CD8-positive, alpha-beta T cell (primary cell): ENCODE measurements at regions of chr4 and their contacts with region 1.

Region 1: DNA sequence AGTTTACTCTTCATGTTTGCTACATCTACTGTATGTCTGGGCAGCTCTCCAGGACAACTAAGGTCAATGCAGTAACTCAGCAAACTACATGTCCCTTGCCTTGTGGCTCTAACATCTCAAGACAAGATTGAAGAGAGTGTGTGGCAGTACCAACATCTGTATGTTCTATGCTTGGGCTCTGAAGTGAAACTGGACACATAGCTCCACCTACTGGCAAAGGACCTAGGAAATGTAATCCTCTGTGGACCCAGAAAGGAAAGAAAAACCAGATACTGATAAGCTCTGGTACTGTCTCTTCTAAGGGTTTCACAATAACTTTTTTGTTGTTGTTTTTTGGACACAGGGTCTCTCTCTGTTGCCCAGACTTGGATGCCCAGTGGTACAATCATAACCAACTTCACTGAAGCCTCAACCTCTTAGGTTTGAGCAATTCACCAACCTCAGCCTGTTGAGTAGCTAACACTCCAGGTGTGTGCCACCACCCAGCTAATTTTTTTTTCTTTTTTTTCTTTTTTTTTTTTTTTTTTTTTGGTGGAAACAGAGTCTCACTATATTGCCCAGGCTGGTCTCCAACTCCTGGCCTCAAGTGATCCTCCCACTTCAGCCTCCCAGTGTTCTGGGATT is 64.1 kb downstream of the QDPR start:
- DNase-seq: peak; percentile 5 to 73 (median 44)
- ATAC-seq: peak; percentile 66
- H3K4me3 ChIP-seq: no peak overlapping the region
- H3K4me3 Mint-ChIP-seq: no peak overlapping the region
- H3K27ac ChIP-seq: no peak overlapping the region
- H3K27ac Mint-ChIP-seq: no peak overlapping the region
- H3K4me1 ChIP-seq: no peaks in the 10 kb centered on the region
- H3K4me1 Mint-ChIP-seq: no peaks in the 10 kb centered on the region
- H3K27me3 ChIP-seq: no peaks in the 10 kb centered on the region
- H3K27me3 Mint-ChIP-seq: no peaks in the 10 kb centered on the region
- CTCF ChIP-seq: peak; percentile 71

Region 2: GRCh38 chr4:16289897-16290554 is 1157.8 kb before region 1 on chr4:
- CTCF ChIA-PET with region 1: interaction called, 23 read pairs
- POLR2A ChIA-PET with region 1: no interaction called
- intact Hi-C with region 1: loop called in 1 of 2 experiments (anchors 1 kb)
- DNase-seq: peak in 2 of 9 experiments; percentile 24 to 41
- ATAC-seq: no peak
- H3K4me3 ChIP-seq: no peak overlapping the region
- H3K4me3 Mint-ChIP-seq: no peak overlapping the region
- H3K27ac ChIP-seq: no peak overlapping the region
- H3K27ac Mint-ChIP-seq: no peak overlapping the region
- H3K4me1 ChIP-seq: no peaks in the 10 kb centered on the region
- H3K4me1 Mint-ChIP-seq: peaks cover 4% of the 10 kb centered on the region
- H3K27me3 ChIP-seq: no peaks in the 10 kb centered on the region
- H3K27me3 Mint-ChIP-seq: peaks cover 23% of the 10 kb centered on the region
- CTCF ChIP-seq: peak; percentile 65

Region 3: DNA sequence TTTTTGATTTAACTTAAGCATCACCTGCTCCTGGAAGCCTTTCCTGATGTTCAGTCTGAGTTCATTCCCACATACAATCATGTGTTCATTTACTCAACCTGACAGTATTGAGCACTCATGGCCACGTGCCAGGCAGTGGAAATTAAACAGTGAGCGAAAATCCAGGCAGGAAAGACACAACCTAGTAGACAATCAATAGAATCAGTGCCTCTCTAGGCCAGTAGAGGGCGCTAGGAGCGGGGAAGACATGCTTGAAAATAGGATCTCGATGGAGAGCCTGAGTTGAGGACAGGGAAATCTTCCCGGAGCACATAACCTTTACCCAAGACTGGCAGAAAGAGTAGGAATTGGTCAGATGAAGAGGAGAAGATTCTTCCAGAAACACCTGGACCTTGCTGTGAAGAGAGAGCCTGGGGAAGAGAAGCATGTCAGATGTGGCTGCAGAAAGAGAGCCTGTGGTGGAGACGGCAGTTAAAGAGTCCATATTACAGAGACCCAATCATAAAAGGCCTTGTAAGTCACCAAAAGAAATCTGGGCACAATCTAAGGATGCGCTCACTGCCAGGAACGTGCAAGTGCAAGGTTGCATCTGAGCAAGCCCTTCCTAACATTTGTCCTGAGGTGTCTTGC is 652.9 kb before region 1 on chr4:
- CTCF ChIA-PET with region 1: interaction called, 4 read pairs
- POLR2A ChIA-PET with region 1: no interaction called
- intact Hi-C with region 1: loop called in 1 of 2 experiments (anchors 2 kb)
- DNase-seq: peak in 5 of 9 experiments; percentile 2 to 52 (median 37)
- ATAC-seq: no peak
- H3K4me3 ChIP-seq: no peak overlapping the region
- H3K4me3 Mint-ChIP-seq: no peak overlapping the region
- H3K27ac ChIP-seq: no peak overlapping the region
- H3K27ac Mint-ChIP-seq: no peak overlapping the region
- H3K4me1 ChIP-seq: no peaks in the 10 kb centered on the region
- H3K4me1 Mint-ChIP-seq: peaks cover 1% of the 10 kb centered on the region
- H3K27me3 ChIP-seq: no peaks in the 10 kb centered on the region
- H3K27me3 Mint-ChIP-seq: no peaks in the 10 kb centered on the region
- CTCF ChIP-seq: peak; percentile 47

Region 4: GRCh38 chr4:16916719-16917337 is 531.0 kb before region 1 on chr4:
- CTCF ChIA-PET with region 1: interaction called, 3 read pairs
- POLR2A ChIA-PET with region 1: no interaction called
- intact Hi-C with region 1: loop called (anchors 2 kb)
- DNase-seq: peak; percentile 39 to 83 (median 65)
- ATAC-seq: peak; percentile 95
- H3K4me3 ChIP-seq: no peak overlapping the region
- H3K4me3 Mint-ChIP-seq: no peak overlapping the region
- H3K27ac ChIP-seq: no peak overlapping the region
- H3K27ac Mint-ChIP-seq: no peak overlapping the region
- H3K4me1 ChIP-seq: no peaks in the 10 kb centered on the region
- H3K4me1 Mint-ChIP-seq: peaks cover 3% of the 10 kb centered on the region
- H3K27me3 ChIP-seq: no peaks in the 10 kb centered on the region
- H3K27me3 Mint-ChIP-seq: peaks cover 2% of the 10 kb centered on the region
- CTCF ChIP-seq: peak; percentile 80

Region 5: GRCh38 chr4:17284323-17285175 is 163.2 kb before region 1 on chr4:
- CTCF ChIA-PET with region 1: interaction called, 8 read pairs
- POLR2A ChIA-PET with region 1: no interaction called
- intact Hi-C with region 1: loop called (anchors 2 to 5 kb)
- DNase-seq: no peak
- ATAC-seq: no peak
- H3K4me3 ChIP-seq: no peak overlapping the region
- H3K4me3 Mint-ChIP-seq: no peak overlapping the region
- H3K27ac ChIP-seq: no peak overlapping the region
- H3K27ac Mint-ChIP-seq: no peak overlapping the region
- H3K4me1 ChIP-seq: no peaks in the 10 kb centered on the region
- H3K4me1 Mint-ChIP-seq: no peaks in the 10 kb centered on the region
- H3K27me3 ChIP-seq: no peaks in the 10 kb centered on the region
- H3K27me3 Mint-ChIP-seq: peaks cover 5% of the 10 kb centered on the region
- CTCF ChIP-seq: no peak

Region 6: DNA sequence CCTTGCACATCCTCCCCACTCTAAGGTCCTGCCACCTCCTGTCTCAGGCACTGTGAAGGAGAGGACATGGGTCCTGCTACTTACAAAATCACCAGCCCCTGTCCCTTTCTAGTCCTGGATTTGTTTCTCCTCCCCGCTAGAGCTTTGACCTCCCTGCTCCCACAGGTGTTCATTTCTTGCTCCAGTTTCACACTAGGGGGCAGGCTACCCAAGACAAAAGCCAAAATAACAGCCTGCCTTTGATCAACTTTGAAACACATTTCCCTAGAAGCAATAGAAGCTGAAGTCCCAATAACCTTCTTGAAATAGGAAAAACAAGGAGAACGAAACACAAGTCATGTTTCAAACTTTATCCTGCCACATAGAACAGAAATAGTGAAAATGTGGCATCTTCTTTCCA is 100.3 kb before region 1 on chr4:
- CTCF ChIA-PET with region 1: interaction called, 9 read pairs
- POLR2A ChIA-PET with region 1: no interaction called
- intact Hi-C with region 1: loop called (anchors 1 to 2 kb)
- DNase-seq: peak in 3 of 9 experiments; percentile 24 to 49 (median 43)
- ATAC-seq: no peak
- H3K4me3 ChIP-seq: no peak overlapping the region
- H3K4me3 Mint-ChIP-seq: no peak overlapping the region
- H3K27ac ChIP-seq: no peak overlapping the region
- H3K27ac Mint-ChIP-seq: no peak overlapping the region
- H3K4me1 ChIP-seq: no peaks in the 10 kb centered on the region
- H3K4me1 Mint-ChIP-seq: no peaks in the 10 kb centered on the region
- H3K27me3 ChIP-seq: no peaks in the 10 kb centered on the region
- H3K27me3 Mint-ChIP-seq: no peaks in the 10 kb centered on the region
- CTCF ChIP-seq: peak; percentile 43